ENCODE measurements at regions of chr17 and their contacts with region 1.

Region 1: DNA sequence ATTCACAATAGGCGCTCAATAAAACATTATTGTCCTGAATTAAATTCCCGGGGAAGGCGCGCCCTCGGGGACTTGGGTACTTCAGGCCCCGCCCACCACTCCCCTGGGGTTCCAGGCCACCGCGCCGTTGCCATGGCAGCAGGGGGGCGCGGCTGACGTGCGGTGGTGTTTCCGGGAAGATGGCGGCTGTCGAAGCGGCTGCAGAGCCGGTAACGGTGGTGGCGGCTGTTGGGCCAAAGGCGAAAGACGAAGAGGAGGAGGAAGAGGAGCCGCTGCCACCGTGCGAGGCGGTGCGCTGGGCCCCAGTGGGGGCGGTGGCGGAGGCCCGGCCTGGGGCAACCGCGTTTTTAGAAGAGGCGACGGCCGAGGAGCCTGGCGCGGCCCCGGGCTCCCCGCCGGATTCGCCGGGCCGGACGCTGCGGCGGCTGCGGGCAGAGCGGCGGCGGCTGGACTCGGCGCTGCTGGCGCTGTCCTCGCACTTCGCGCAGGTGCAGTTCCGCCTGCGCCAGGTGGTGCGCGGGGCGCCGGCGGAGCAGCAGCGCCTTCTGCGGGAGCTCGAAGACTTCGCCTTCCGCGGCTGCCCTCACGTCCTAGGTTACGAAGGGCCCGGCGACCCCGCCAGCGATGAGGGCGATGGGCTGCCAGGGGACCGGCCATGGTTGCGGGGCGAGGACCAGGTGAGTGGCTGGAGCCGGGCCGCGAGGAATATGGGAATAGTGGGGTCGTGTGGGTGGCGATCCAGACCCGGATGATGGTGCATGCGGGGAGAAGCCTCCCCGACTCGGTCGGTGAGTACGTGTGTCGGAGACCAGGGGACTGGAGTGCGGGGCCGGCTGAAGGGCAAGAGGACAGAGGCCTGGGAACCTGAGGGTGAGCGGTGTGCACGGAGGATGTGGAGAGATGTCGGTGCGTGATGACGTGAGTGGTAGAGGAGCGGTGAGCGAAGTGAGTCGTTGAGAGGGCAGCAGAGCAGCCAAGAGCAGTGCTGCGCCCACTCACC is at the start of gene RUNDC1:
- DNase-seq: peak; percentile 86
- H3K4me3 Mint-ChIP-seq: peak within 1 kb of the TSS; percentile 95
- H3K27ac Mint-ChIP-seq: peak within 1 kb of the TSS; percentile 82
- H3K4me1 Mint-ChIP-seq: peaks cover 12% of the 10 kb centered on the region
- H3K27me3 Mint-ChIP-seq: no peaks in the 10 kb centered on the region
- CTCF ChIP-seq: peak; percentile 36
- total RNA-seq, gene RUNDC1: 13.4 and 14.2 TPM in 2 replicates

Region 2: GRCh38 chr17:42964161-42964932 is 16.4 kb before region 1 on chr17 and contains the start of gene AARSD1:
- CTCF ChIA-PET with region 1: interaction called, 3 read pairs
- POLR2A ChIA-PET with region 1: interaction called, 13 read pairs
- intact Hi-C with region 1: no loop called
- DNase-seq: peak; percentile 90
- H3K4me3 Mint-ChIP-seq: peak within 1 kb of the TSS; percentile 96
- H3K27ac Mint-ChIP-seq: peak within 1 kb of the TSS; percentile 95
- H3K4me1 Mint-ChIP-seq: peaks cover 10% of the 10 kb centered on the region
- H3K27me3 Mint-ChIP-seq: no peaks in the 10 kb centered on the region
- CTCF ChIP-seq: no peak
- total RNA-seq, gene AARSD1: 48.9 and 79.9 TPM in 2 replicates

Measured in MCF 10A (cell line).